ENCODE measurements at regions of chr17 and their contacts with region 1.

Region 1: GRCh38 chr17:1124896-1125787 is 54.6 kb downstream of the ABR start:
- DNase-seq: no peak
- H3K4me3 ChIP-seq: no peak overlapping the region
- H3K27ac ChIP-seq: no peak overlapping the region
- H3K4me1 ChIP-seq: peaks cover 0 to 15% (median 13%) of the 10 kb centered on the region in 4 donors
- H3K27me3 ChIP-seq: no peaks in the 10 kb centered on the region
- CTCF ChIP-seq: no peak

Region 2: GRCh38 chr17:1179818-1180742 is 54.9 kb after region 1 on chr17 and contains the start of gene ABR:
- intact Hi-C with region 1: loop called (anchors 5 kb)
- DNase-seq: no peak
- H3K4me3 ChIP-seq: peak within 1 kb of the TSS; percentile 76 to 88
- H3K27ac ChIP-seq: peak within 1 kb of the TSS; percentile 69 to 72
- H3K4me1 ChIP-seq: peaks cover 9 to 43% (median 34%) of the 10 kb centered on the region in 4 donors
- H3K27me3 ChIP-seq: no peaks in the 10 kb centered on the region
- CTCF ChIP-seq: no peak

Region 3: DNA sequence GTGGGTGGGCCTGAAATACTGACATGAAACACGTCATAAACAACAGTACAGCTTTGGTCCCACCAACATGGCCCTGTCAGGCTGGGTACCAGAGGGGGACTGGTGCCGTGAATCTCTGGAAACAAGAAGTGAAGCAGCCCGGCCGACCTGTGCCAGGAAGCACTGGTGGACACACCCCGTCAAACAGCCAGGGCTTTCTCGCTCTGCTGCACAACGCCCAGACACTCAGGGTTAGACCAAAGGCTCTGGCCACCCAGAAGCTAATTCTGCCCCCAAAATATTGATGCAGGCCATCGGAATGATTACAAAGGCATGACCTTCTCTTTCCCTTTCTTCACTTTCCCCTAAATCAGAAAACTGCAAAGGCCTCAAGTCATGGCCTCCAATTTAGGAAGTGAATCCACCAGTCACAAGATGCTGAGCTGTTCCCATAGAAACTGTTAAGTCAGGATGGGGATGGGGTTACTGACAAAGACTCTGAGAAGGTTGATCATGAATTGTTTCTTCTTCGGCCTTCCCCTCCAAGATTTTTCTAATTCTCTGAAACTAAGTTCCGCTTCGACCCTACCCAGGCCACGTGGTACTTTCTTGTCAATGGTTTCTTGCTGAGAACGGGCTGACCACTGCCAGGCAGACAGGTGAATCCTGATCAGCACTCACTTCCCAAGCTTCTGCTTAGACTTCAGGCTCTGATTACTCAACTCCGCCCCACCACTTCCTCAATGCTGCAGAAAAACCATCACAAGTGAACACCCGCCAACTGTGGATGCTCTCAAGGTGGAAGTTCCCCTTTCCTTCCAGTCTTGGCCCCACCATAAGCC is 430.7 kb after region 1 on chr17:
- intact Hi-C with region 1: no loop called
- DNase-seq: no peak
- H3K4me3 ChIP-seq: no peak overlapping the region
- H3K27ac ChIP-seq: no peak overlapping the region
- H3K4me1 ChIP-seq: peaks cover 0 to 34% (median 8%) of the 10 kb centered on the region in 4 donors
- H3K27me3 ChIP-seq: no peaks in the 10 kb centered on the region
- CTCF ChIP-seq: no peak

Measured in tibial artery (tissue), 4 donors.